Calu3 (cell line): ENCODE measurements at regions of chr2 and their contacts with region 1.

Region 1: DNA sequence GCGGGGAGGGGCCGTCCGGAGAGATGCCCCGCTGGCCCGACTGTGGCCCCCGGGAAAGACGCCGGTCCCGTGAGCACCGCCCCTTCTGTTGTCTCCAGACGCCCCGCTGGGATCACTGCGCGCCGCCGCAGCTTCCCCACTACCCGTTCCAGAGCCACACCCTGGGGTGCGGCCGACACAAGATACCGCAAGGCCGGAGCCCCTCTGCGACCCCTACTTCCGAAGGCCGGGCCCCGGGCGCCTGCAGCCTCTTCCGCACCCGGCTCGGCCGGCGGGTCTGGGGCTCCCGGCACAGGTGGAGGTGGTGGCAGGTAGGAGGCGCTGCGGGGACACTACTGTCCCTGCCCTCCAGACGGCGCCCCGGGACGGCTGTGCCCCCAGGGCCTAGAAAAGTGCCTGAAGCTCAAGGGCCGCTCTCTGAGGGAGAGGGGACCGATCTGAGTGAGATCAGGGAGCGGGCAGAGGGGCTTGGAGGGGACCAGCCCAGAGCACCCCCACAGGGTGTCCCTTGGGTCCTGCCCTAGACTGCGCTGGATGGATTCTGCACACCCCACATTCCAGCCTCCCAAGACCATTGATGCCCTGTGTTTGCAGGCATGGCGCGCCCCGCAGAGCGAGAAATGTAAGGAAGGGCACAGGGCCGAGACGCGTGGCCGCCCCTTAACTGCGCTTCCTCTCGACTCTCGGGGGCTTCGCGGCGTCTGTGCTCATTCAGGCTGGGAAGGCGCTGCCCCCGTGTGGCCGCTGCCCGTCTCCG is 80.0 kb downstream of the GFPT1 start:
- DNase-seq: peak; percentile 80
- H3K4me3 Mint-ChIP-seq: peak overlapping the region; percentile 68
- H3K27ac Mint-ChIP-seq: peak overlapping the region; percentile 15
- H3K4me1 Mint-ChIP-seq: peaks cover 20% of the 10 kb centered on the region
- H3K27me3 Mint-ChIP-seq: peaks cover 52% of the 10 kb centered on the region
- CTCF ChIP-seq: peak; percentile 83

Region 2: GRCh38 chr2:68943581-68944568 is 363.1 kb before region 1 on chr2:
- CTCF ChIA-PET with region 1: interaction called, 6 read pairs
- intact Hi-C with region 1: loop called (anchors 1 kb)
- DNase-seq: peak; percentile 63
- H3K4me3 Mint-ChIP-seq: no peak overlapping the region
- H3K27ac Mint-ChIP-seq: no peak overlapping the region
- H3K4me1 Mint-ChIP-seq: no peaks in the 10 kb centered on the region
- H3K27me3 Mint-ChIP-seq: peaks cover 46% of the 10 kb centered on the region
- CTCF ChIP-seq: peak; percentile 80

Region 3: GRCh38 chr2:69026026-69026425 is 281.0 kb before region 1 on chr2:
- CTCF ChIA-PET with region 1: no interaction called
- intact Hi-C with region 1: loop called (anchors 1 kb)
- DNase-seq: peak; percentile 66
- H3K4me3 Mint-ChIP-seq: no peak overlapping the region
- H3K27ac Mint-ChIP-seq: no peak overlapping the region
- H3K4me1 Mint-ChIP-seq: no peaks in the 10 kb centered on the region
- H3K27me3 Mint-ChIP-seq: peaks cover 15% of the 10 kb centered on the region
- CTCF ChIP-seq: peak; percentile 57